Esophagus squamous epithelium (tissue), 5 donors: ENCODE measurements at regions of chr11 and their contacts with region 1.

Region 1: DNA sequence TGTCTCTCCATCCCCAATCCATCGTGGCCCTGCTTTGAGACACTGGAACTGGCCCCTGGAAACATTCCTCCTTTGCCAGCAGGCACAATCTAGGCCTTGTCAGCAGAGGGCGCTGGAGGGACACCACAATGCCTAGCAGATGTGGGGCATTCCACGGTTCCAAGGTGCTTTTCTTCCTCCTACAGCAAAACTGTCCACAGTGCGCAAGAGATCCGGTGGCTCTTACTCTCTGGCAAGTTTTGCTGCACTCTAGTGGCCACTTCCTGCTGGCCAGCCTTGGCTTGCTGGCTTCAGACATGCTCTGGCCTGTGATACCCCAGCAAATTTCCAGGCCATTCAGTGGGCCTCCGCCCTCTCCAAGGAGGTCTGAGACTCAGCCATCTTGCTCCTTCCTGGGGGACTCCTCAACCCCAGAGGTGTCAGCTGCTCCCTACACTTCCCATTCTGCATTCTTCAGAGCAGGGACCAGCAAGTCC is 17.1 kb upstream of the RBM4B start:
- DNase-seq: peak; percentile 51
- H3K4me3 ChIP-seq: no peak overlapping the region
- H3K27ac ChIP-seq: peak overlapping the region in 3 of 4 donors; percentile 3 to 61 (median 19)
- H3K4me1 ChIP-seq: peaks cover 0 to 5% (median 3%) of the 10 kb centered on the region in 3 donors
- H3K27me3 ChIP-seq: no peaks in the 10 kb centered on the region
- CTCF ChIP-seq: peak; percentile 91 to 98 (median 95)
- POLR2A ChIP-seq: no peak

Region 2: GRCh38 chr11:66421492-66422205 is 273.1 kb before region 1 on chr11:
- intact Hi-C with region 1: no loop called
- DNase-seq: peak; percentile 27
- H3K4me3 ChIP-seq: no peak overlapping the region
- H3K27ac ChIP-seq: no peak overlapping the region
- H3K4me1 ChIP-seq: peaks cover 0 to 38% (median 6%) of the 10 kb centered on the region in 3 donors
- H3K27me3 ChIP-seq: peaks cover 0 to 33% (median 1%) of the 10 kb centered on the region in 4 donors
- CTCF ChIP-seq: peak in 2 of 6 experiments; percentile 6 to 8
- POLR2A ChIP-seq: no peak

Region 3: DNA sequence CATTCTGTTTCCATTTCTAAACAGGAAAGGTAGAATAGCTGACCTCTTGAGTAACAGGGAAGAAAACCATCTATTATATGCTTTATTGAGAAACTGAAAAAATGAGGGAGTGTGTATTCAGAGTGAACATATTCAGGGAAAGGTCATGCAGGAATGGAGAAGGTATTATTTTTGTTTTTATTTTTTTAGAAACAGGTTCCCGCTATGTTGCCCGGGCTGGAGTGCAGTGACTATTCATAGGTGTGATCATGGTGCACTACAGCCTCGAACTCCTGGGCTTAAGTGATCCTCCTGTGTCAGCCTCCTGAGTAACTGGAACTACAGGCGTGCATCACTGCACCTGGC is 139.7 kb after region 1 on chr11:
- intact Hi-C with region 1: loop called (anchors 5 kb)
- DNase-seq: no peak
- H3K4me3 ChIP-seq: no peak overlapping the region
- H3K27ac ChIP-seq: peak overlapping the region in 2 of 4 donors; percentile 47 to 54
- H3K4me1 ChIP-seq: peaks cover 0 to 15% (median 6%) of the 10 kb centered on the region in 3 donors
- H3K27me3 ChIP-seq: no peaks in the 10 kb centered on the region
- CTCF ChIP-seq: no peak
- POLR2A ChIP-seq: no peak

Region 4: DNA sequence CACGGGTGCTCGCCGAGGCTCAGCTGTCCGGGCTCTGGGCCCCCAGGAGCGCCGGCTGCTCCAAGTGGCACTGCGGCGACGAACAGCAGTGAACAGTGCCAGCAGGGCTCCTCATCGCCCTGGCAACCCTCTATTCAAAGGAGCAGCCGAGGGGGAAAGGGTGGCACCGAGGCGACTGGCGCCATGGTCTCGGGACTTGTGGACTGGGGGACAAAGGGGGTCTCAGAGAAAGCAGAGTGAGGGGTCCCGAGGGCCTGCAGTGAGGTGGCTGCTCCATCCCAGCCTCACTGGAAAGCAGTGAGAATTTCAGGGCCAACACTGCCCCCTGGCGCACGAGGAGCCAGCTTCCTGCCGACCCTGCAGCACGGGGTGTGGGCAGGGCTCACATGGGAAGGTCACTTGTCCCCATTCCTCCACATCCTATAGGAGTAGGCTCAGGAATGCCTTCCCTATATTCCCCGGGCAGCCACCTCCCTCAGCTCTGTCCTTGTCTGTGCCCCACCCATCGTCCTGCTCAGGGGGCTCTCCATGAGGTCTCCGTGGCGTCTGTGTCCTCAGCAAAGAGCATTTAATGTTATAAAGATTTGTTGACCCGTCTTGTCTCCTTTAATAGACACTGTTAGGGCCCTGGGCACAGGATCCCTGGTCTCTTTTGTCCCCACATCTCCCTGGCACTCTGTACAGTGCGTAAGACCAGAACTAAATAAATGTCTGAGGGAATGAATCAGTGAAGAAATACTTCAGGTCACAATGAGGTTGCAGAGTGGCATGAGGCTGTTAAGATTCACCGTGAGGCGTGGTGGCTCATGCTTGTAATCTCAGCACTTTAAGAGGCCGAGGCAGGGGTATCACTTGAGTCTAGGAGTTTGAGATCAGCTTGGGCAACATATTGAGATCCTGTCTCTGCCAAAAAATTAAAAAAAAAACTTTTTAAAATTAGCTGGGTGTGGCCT is 188.5 kb after region 1 on chr11:
- intact Hi-C with region 1: no loop called
- DNase-seq: no peak
- H3K4me3 ChIP-seq: peak overlapping the region in 3 of 4 donors; percentile 28 to 51 (median 29)
- H3K27ac ChIP-seq: peak overlapping the region; percentile 40 to 77 (median 74)
- H3K4me1 ChIP-seq: peaks cover 34 to 62% (median 41%) of the 10 kb centered on the region in 3 donors
- H3K27me3 ChIP-seq: no peaks in the 10 kb centered on the region
- CTCF ChIP-seq: peak; percentile 40 to 76 (median 69)
- POLR2A ChIP-seq: no peak